HEK293 (cell line): ENCODE measurements at regions of chr1 and their contacts with region 1.

Region 1: GRCh38 chr1:156689035-156689952 is 12.1 kb upstream of the NES start:
- H3K4me3 ChIP-seq: peak overlapping the region; percentile 36
- H3K27ac ChIP-seq: no peak overlapping the region
- H3K4me1 ChIP-seq: peaks cover 16% of the 10 kb centered on the region
- CTCF ChIP-seq: peak; percentile 94

Region 2: DNA sequence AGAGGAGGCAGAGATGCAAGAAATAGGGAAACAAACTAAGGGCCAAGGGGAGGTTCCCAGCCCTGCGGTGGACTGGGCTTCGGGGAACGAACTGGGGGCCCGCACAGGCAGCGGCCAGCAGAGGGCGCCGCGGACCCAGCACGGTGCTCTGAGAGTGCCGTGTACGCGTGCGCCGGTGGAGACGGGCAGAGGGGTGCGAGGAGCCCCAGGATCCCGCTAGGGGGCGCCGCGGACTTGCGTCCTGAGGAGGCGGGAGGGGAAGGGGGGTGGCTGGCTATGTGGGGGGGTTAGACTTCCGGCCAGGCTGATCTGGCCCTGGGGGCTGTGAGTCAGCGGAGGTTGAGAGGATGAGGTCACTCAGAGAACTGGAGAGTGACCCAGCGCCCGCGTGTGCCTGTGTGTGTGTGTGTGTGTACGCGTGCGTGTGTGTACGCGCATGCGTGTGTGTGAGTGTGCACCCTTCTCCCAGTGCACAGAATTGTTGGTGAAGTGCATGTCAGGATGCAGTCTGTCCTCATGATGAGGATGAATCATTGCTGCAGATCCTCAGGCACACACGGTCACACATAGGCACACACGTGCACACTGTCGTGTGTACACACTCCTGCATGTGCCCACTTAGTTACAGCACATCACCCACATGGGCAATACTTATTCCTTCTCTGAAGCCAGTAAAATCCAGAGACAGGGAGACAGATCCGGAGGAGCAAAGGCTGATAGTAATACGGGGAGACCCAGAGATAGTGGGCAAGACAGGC is 29.1 kb before region 1 on chr1:
- CTCF ChIA-PET with region 1: interaction called, 564 read pairs
- POLR2A ChIA-PET with region 1: no interaction called
- H3K4me3 ChIP-seq: peak overlapping the region; percentile 38
- H3K27ac ChIP-seq: peak overlapping the region; percentile 76
- H3K4me1 ChIP-seq: peaks cover 9% of the 10 kb centered on the region; the same call in 1 of the 2 replicates
- CTCF ChIP-seq: peak; percentile 100

Region 3: GRCh38 chr1:156717275-156717805 is 28.0 kb after region 1 on chr1:
- CTCF ChIA-PET with region 1: interaction called, 579 read pairs
- POLR2A ChIA-PET with region 1: interaction called, 11 read pairs
- H3K4me3 ChIP-seq: no peak overlapping the region
- H3K27ac ChIP-seq: no peak overlapping the region
- H3K4me1 ChIP-seq: no peaks in the 10 kb centered on the region
- CTCF ChIP-seq: no peak

Region 4: GRCh38 chr1:156797212-156797871 is 108.0 kb after region 1 on chr1:
- CTCF ChIA-PET with region 1: interaction called, 25 read pairs
- POLR2A ChIA-PET with region 1: no interaction called
- H3K4me3 ChIP-seq: no peak overlapping the region
- H3K27ac ChIP-seq: no peak overlapping the region
- H3K4me1 ChIP-seq: no peaks in the 10 kb centered on the region
- CTCF ChIP-seq: 0 out of 2 replicates have a peak, but pooled peaks have one; percentile 47

Region 5: DNA sequence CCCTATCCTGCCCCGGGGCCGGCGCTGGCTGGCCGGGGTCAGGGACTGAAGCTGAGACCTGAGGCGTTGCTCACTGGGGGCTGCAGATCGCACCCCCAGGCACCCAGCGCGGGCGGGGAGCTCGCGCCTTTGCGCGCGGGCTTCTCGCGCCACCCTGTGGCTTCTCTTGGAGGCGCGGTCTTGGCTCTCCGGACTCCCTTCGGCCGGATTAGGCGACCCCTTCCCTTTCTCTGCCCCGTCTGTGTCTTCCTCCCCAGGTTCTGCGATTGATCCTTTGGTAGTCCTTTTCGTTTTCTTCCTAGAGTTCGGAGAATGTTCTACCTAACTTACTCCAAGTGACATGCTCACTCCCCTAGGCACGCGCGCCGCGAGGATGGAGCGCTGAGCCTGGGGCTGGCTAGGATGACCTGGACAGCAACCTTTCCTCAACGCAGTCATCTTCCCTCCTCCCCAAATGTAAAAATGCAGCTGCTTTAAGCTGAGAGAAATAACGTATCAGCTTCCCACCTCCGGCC is 170.9 kb after region 1 on chr1:
- CTCF ChIA-PET with region 1: interaction called, 86 read pairs
- POLR2A ChIA-PET with region 1: interaction called, 4 read pairs
- H3K4me3 ChIP-seq: peak overlapping the region; percentile 35
- H3K27ac ChIP-seq: no peak overlapping the region
- H3K4me1 ChIP-seq: peaks cover 2% of the 10 kb centered on the region; the same call in 1 of the 2 replicates
- CTCF ChIP-seq: peak; percentile 90

Region 6: DNA sequence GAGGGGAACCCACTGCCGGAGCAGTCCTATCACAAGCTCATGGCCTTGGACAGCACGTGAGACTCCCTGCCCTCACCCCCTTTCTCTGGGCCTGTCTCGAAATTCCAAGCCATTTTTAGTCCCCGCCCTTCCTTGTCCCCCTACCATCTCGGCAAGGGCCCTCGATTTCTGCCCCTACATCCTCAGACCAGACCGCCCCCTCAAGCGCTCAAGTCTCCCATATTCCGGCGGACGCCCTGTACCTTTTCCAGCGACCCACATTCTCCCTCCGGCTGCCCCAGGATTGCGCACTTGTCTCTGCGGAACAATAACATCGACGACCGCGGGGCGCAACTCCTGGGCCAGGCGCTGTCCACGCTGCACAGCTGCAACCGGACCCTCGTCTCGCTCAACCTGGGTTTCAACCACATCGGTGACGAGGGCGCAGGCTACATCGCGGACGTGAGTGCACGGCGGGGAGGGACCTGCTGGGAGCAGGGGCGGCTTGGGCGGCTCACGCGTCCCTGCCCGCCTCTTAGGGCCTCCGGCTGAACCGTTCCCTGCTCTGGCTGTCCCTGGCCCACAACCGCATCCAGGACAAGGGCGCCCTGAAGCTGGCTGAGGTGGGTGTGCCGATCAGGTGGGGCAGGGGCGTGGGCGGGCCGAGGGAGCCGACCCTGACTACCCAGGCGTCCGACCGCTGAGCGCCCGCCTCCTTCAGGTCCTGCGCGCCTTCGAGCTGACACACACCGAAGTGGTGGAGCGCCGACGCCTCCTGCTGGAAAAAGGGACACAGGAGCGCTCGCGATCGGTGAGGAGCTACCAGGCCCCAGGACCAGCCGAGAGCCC is 238.1 kb after region 1 on chr1:
- CTCF ChIA-PET with region 1: interaction called, 43 read pairs
- POLR2A ChIA-PET with region 1: interaction called, 3 read pairs
- H3K4me3 ChIP-seq: peak overlapping the region; percentile 33
- H3K27ac ChIP-seq: no peak overlapping the region; the same call in 1 of the 2 replicates
- H3K4me1 ChIP-seq: no peaks in the 10 kb centered on the region; the same call in 1 of the 2 replicates
- CTCF ChIP-seq: peak; percentile 90